ENCODE measurements at regions of chr16 and their contacts with region 1.

Region 1: DNA sequence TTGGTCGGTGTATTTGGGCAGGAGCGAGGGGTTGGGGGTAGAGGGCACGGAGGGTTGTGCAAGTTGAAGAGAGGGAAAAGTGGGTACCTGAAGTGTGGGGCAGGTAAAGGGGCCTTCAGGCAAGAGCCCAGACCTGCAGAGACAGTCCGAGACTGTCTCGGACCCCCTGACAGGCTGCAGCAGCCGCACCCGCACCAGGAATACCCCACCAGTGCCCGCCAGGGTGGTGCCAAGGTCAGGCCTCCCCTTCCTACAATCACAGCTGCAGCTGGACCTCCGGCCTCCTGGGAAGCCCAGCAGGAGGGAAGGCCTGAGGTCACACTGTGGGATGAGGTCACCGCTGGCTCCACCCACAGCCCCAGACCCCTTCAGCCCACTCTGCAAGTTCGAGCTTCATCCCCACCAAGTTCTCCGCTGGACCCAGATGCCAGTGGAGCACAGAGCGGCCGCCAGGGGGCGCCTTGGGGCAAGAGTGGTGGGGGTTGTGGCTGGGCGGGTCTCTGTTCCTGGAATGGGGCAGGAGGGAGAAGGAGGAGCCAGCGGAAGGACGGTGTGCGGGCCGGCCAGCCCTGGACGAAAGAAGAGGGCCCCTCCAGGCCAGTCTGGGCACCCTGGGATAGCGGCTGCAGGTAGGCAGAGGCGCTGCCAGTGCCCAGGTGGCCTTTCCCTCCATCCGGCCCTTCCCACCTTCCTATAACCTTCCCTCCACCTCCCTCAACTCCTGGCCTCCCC is at the start of gene HSD3B7:
- DNase-seq: peak; percentile 97
- H3K4me3 ChIP-seq: peak within 1 kb of the TSS in 7 of 8 donors; percentile 27 to 65 (median 39)
- H3K27ac ChIP-seq: peak within 1 kb of the TSS; percentile 21 to 81 (median 70)
- H3K4me1 ChIP-seq: peaks cover 6 to 30% (median 25%) of the 10 kb centered on the region in 6 donors
- H3K27me3 ChIP-seq: no peaks in the 10 kb centered on the region
- CTCF ChIP-seq: peak; percentile 93 to 98 (median 95)
- POLR2A ChIP-seq: no peak
- total RNA-seq, gene HSD3B7: 11.0 to 24.5 (median 18.6) TPM

Region 2: GRCh38 chr16:31094424-31095120 is 109.7 kb after region 1 on chr16 and contains the start of gene VKORC1:
- intact Hi-C with region 1: loop called (anchors 10 kb)
- DNase-seq: peak; percentile 96
- H3K4me3 ChIP-seq: peak within 1 kb of the TSS; percentile 48 to 84 (median 73)
- H3K27ac ChIP-seq: peak within 1 kb of the TSS; percentile 67 to 95 (median 89)
- H3K4me1 ChIP-seq: peaks cover 18 to 41% (median 30%) of the 10 kb centered on the region in 6 donors
- H3K27me3 ChIP-seq: no peaks in the 10 kb centered on the region
- CTCF ChIP-seq: peak in 4 of 11 experiments; percentile 25 to 34 (median 28)
- POLR2A ChIP-seq: no peak
- total RNA-seq, gene VKORC1: 33.4 to 74.2 (median 48.2) TPM

Region 3: DNA sequence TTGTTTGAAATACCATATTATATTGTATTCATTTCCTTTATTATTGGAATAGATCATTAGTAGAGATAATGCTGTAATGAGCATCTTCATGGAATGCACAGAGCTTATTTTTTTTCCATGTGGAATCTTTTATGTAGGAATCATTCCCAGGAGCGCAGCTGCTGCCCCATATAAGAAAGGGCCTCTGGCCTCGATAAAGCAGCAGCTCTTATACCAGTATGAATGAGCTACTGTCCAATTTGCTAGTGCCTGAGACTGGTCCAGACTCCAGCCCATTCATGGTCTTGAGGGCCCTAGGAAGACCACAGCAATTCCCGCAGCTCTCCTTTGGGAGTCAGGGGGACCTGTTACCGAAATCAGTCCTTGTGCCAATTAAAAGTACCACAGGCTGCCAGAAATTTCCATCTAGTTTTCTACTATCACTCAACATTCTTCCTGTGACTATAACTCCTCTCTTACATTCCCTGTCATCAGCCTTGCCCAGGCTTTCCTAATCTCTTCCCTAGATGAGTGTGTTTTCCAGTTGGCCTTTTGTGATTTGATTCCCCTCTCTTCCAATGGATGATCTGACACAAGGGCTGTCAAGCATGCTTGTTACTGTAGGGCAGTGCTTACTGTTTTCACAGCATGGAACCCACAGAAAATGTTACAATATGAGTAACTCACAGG is 455.8 kb after region 1 on chr16:
- intact Hi-C with region 1: loop called (anchors 5 kb)
- DNase-seq: no peak
- H3K4me3 ChIP-seq: no peak overlapping the region
- H3K27ac ChIP-seq: no peak overlapping the region
- H3K4me1 ChIP-seq: peaks cover 0 to 31% (median 13%) of the 10 kb centered on the region in 6 donors
- H3K27me3 ChIP-seq: no peaks in the 10 kb centered on the region
- CTCF ChIP-seq: no peak
- POLR2A ChIP-seq: no peak

Measured in spleen (tissue), 13 donors.